Activated CD4-positive, alpha-beta memory T cell treated with anti-CD3 and anti-CD28 coated beads for 36 hours (primary cell): ENCODE measurements at regions of chr1 and their contacts with region 1.

Region 1: DNA sequence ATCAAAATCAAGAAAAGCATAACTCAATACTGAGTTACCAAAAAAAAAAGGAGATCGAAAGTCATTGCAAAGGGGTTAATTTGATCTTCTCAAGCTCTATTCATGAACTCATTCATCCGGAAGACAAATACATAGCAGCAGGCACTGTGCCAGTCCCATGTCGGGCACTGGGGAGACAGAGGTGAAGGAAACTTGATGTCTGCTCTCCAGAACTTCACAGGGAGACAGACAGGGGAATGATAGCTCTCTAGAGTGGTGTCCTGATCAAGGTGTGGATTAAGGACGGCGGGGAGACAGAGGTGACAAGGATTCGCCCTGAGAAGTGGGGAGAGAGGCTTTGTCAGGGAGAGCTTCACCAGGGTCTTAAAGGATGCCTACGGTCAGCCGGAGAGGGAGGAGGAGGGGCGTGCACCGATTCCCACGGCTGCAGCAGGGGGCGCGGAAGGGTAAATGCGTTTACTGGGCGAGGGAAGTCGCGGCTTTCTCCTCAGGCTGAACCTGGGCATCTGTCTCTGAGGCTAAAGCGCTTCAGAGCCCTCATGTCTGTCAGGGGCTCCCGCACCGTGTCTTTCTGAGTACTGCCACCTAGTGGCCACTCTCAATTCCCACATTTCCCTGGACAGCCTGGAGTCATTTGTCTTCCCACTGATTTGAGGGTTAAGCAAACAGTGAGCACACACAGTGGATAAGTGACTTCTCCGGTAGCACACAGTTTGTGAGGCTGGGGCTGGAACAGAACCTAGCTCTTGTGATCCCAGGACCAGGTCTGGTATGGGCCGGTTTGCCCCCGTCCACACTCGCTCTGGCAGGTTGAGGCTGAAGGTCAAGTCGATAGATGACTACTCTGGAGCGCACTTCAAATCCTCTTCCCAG is 152.8 kb downstream of the TENT5C start:
- DNase-seq: peak; percentile 76
- H3K4me3 Mint-ChIP-seq: peak overlapping the region; percentile 58
- H3K27ac Mint-ChIP-seq: no peak overlapping the region
- H3K4me1 Mint-ChIP-seq: peaks cover 13% of the 10 kb centered on the region
- H3K27me3 Mint-ChIP-seq: peaks cover 7% of the 10 kb centered on the region

Region 2: DNA sequence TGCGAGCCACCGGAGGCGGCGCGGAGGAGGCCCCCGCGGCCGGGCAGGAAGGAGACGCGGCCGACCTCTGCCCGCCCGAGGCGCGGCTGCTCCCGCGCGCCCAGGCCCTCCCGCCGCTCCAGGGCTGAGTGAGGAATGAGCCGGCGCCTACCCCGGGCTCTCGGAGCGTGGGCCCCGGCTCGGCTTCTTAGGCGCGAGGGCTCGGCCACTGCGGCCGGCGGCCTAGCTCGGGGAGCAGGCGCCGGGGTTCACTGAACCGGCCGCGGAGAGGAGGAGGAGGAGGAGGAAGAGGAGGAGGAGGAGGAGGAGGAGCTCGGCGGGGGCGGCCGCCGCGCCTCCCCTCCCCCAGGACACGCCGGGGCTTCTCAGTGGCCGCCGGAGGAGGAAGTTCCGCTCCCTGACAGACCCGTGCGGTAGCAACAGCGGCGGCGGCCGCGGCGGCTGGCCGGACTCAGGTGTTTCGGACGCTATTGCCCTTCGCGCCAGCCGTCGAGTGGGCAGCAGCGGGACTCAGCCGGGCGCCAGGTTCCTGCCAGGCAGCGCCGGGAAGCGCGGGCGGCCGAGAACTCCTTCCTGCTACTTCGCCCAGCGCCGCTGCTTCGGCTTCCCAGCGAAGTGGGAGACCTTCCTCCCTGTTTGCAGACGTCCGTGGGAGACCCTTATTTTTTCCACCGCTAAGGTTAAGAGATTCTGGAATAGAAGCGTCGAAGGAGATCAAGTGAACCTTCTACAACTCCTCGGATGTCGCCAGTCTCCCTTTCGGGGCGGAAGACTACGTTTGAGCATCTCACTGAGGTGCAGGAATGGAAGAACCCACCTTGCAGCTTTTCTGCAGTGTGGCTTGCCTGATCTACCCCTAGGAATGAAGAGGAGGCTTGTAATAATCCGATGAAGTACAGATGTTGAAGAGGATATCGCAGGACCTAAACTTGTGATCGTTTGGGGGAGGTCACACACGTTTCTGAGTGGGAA is 391.3 kb before region 1 on chr1 and contains the start of gene MAN1A2:
- CTCF ChIA-PET with region 1: interaction called, 8 read pairs
- POLR2A ChIA-PET with region 1: no interaction called
- intact Hi-C with region 1: loop called (anchors 10 kb)
- DNase-seq: peak; percentile 79
- H3K4me3 Mint-ChIP-seq: peak within 1 kb of the TSS; percentile 94
- H3K27ac Mint-ChIP-seq: peak within 1 kb of the TSS; percentile 96
- H3K4me1 Mint-ChIP-seq: peaks cover 50% of the 10 kb centered on the region
- H3K27me3 Mint-ChIP-seq: no peaks in the 10 kb centered on the region
- total RNA-seq, gene MAN1A2: 18.3 to 22.5 TPM

Region 3: GRCh38 chr1:117527566-117528102 is 231.0 kb before region 1 on chr1:
- CTCF ChIA-PET with region 1: interaction called, 271 read pairs
- POLR2A ChIA-PET with region 1: no interaction called
- intact Hi-C with region 1: no loop called
- DNase-seq: no peak
- H3K4me3 Mint-ChIP-seq: no peak overlapping the region
- H3K27ac Mint-ChIP-seq: no peak overlapping the region
- H3K4me1 Mint-ChIP-seq: peaks cover 21% of the 10 kb centered on the region
- H3K27me3 Mint-ChIP-seq: no peaks in the 10 kb centered on the region

Region 4: GRCh38 chr1:117612517-117613248 is 146.0 kb before region 1 on chr1:
- CTCF ChIA-PET with region 1: interaction called, 17 read pairs
- POLR2A ChIA-PET with region 1: interaction called, 5 read pairs
- intact Hi-C with region 1: no loop called
- DNase-seq: peak; percentile 23
- H3K4me3 Mint-ChIP-seq: no peak overlapping the region
- H3K27ac Mint-ChIP-seq: peak overlapping the region; percentile 64
- H3K4me1 Mint-ChIP-seq: peaks cover 86% of the 10 kb centered on the region
- H3K27me3 Mint-ChIP-seq: no peaks in the 10 kb centered on the region

Region 5: DNA sequence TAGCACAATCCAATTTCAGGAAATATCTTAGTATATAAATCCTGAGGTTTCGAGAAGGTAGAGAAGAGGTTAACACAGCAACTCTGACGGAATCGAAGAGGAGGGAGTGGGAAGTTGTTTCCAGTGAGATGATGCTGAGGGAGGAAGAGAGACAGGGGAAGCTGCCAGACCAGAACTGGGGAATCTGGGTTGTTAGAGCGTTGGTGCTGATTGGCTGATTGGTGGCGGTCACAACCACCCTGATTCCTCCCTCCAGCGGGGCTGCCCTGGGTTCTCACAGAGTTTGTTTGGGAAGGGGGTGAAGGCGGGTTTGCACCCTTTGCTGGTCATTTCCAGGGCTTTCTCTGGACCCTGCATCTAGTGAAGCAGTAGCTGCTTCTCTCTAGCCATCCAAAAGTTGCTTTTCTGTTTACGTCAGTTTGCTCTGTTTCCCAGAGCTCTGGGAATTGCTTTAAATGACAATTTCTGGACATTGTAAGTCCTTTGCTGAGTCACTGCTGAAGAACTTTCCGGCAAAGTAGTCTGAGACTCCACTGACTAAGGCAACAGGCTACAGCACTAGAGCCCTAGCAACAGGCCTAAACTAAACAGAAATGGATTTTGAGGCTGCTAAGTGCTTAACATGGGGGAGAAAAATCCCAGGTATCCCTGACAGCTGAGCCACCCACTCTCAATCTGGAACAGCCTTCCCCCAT is 62.7 kb before region 1 on chr1:
- CTCF ChIA-PET with region 1: interaction called, 12 read pairs
- POLR2A ChIA-PET with region 1: no interaction called
- intact Hi-C with region 1: no loop called
- DNase-seq: no peak
- H3K4me3 Mint-ChIP-seq: no peak overlapping the region
- H3K27ac Mint-ChIP-seq: no peak overlapping the region
- H3K4me1 Mint-ChIP-seq: no peaks in the 10 kb centered on the region
- H3K27me3 Mint-ChIP-seq: no peaks in the 10 kb centered on the region

Region 6: DNA sequence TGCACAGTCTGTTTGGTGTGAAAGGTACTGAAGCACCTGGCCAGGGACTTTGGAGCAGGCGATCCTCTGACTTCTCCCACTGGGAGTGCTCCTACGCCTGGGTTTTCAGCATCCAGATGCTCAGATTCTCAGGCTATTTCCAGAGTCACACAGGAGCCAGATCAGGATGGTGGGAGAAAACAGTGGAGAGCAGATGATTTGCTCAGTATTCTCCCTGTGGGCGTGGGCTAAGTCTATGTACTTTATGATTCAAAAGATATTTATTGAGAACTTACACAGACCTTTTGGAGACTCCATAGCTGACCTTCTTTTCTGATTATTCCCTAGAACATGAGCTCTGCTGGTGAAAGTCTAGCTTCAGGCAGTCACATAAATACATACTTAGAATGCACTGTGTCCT is 18.2 kb before region 1 on chr1:
- CTCF ChIA-PET with region 1: interaction called, 29 read pairs
- POLR2A ChIA-PET with region 1: no interaction called
- intact Hi-C with region 1: no loop called
- DNase-seq: no peak
- H3K4me3 Mint-ChIP-seq: no peak overlapping the region
- H3K27ac Mint-ChIP-seq: no peak overlapping the region
- H3K4me1 Mint-ChIP-seq: peaks cover under 1% of the 10 kb centered on the region
- H3K27me3 Mint-ChIP-seq: no peaks in the 10 kb centered on the region